ENCODE measurements at regions of chr12 and their contacts with region 1.

Region 1: DNA sequence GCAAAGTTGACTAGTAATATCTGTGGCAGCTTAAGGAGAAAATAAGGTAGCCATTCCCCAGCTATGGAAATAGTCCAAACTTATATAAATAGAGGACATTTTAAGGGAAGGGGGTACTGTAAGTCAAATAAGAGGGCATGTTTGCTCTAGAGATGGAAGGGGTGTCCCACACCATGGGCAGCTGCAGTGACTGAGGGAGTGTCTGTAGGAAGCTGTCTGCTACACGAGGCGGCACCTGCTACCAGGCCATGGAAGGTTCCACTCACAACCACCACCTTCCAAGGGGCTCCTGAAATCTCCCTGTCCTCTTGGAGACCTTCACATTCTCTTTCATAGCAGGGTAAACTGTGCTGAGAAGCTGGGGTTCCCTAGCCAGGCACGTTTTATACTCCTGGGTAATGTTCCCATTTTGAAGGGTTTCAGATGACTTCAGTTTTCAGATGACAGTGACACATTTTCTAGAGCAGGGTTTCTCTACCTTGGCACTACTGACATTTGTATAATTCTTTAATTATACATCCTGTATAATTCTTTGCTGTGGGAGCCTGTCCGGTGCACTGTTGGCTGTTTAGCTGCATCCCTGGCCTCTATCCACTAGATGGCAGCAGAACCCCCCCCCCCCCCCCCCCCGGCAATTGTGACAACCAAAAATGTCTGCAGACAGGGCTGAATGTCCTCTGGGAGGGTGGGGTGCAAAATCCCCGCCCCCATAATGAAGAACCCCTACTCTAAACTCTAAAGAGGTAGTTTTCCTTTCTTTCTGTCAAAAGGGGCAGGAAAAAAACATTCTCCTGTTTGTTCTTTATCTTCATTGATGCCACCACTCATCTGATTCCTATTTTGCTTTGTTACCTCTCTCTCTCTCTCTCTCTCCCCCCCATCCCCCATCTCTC is 11.6 kb upstream of the SMCO2 start:
- DNase-seq: no peak
- ATAC-seq: peak in 6 of 8 donors; percentile 53 to 73 (median 62)
- H3K4me3 ChIP-seq: no peak overlapping the region
- H3K27ac ChIP-seq: peak overlapping the region in 4 of 10 donors; percentile 18 to 32 (median 27)
- H3K4me1 ChIP-seq: peaks cover 0 to 21% (median 14%) of the 10 kb centered on the region in 9 donors
- H3K27me3 ChIP-seq: no peaks in the 10 kb centered on the region
- CTCF ChIP-seq: peak; percentile 29 to 74 (median 63)

Region 2: DNA sequence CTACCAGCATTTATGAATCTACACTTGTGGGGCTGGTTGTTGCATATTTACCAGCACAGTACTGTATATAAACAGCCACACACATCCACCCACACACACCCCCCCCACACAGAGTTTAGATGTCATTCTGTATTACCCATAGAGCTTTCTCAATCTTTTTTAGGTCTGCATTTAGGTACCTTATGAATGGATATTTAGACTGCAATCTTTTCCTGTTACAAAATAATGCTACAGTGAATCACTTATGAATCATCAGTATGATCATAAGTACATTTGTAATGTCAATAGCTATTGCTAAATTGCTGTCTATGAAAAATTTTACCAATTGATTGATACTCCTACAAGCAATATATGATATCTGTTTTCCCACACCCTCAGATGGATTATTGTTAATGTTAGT is 258.1 kb before region 1 on chr12:
- intact Hi-C with region 1: no loop called
- DNase-seq: no peak
- ATAC-seq: no peak
- H3K4me3 ChIP-seq: no peak overlapping the region
- H3K27ac ChIP-seq: peak overlapping the region in 5 of 10 donors; percentile 20 to 87 (median 82)
- H3K4me1 ChIP-seq: peaks cover 4 to 52% (median 23%) of the 10 kb centered on the region in 9 donors
- H3K27me3 ChIP-seq: no peaks in the 10 kb centered on the region
- CTCF ChIP-seq: no peak

Region 3: GRCh38 chr12:27505109-27505508 is 70.2 kb after region 1 on chr12:
- intact Hi-C with region 1: loop called in 2 of 10 experiments (anchors 5 kb)
- DNase-seq: no peak
- ATAC-seq: no peak
- H3K4me3 ChIP-seq: no peak overlapping the region
- H3K27ac ChIP-seq: peak overlapping the region; percentile 26 to 76 (median 67)
- H3K4me1 ChIP-seq: peaks cover 0 to 32% (median 19%) of the 10 kb centered on the region in 9 donors
- H3K27me3 ChIP-seq: no peaks in the 10 kb centered on the region
- CTCF ChIP-seq: no peak

Region 4: DNA sequence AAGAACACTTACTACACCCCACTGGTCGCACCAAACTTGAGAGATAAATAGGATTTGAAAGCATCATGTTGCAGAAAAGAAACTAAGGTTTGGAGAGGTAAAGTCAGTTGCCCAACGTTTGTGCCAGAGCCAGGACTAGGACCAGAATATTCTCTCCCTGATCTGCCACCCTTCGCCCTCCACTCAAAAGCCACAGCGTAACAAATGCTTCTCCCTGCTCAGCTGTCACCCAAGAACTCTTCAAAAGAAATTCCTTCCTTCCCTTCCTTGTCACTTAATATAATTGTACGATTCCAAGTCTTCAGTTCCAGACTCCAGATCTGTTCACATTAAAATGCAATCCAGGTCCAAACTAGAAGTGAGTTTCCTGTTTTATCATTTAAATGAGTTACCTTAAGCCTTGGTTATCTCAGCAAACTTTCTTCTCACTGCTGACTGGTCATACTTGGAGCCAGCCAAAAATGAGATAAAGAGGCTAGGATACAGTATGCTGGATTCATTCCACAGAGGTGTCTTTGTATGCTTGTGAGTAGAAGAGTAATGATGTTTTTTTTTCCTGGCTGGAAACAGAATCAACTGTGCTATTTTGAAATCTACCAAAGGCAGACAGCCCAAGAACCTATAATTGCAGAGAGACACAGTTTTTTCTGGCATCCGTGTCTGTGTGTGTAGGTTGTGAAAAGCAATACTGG is 76.3 kb after region 1 on chr12:
- intact Hi-C with region 1: loop called in 2 of 10 experiments (anchors 5 kb)
- DNase-seq: no peak
- ATAC-seq: peak; percentile 32 to 70 (median 54)
- H3K4me3 ChIP-seq: no peak overlapping the region
- H3K27ac ChIP-seq: peak overlapping the region; percentile 24 to 82 (median 67)
- H3K4me1 ChIP-seq: peaks cover 0 to 28% (median 16%) of the 10 kb centered on the region in 9 donors
- H3K27me3 ChIP-seq: no peaks in the 10 kb centered on the region
- CTCF ChIP-seq: no peak

Region 5: GRCh38 chr12:27549801-27550652 is 115.1 kb after region 1 on chr12:
- intact Hi-C with region 1: no loop called
- DNase-seq: peak; percentile 79 to 90
- ATAC-seq: peak; percentile 85 to 93 (median 89)
- H3K4me3 ChIP-seq: peak overlapping the region in 4 of 10 donors; percentile 2 to 30 (median 17)
- H3K27ac ChIP-seq: peak overlapping the region; percentile 65 to 96 (median 83)
- H3K4me1 ChIP-seq: peaks cover 30 to 100% (median 94%) of the 10 kb centered on the region in 9 donors
- H3K27me3 ChIP-seq: no peaks in the 10 kb centered on the region
- CTCF ChIP-seq: peak in 1 of 9 donors; percentile 10

Region 6: DNA sequence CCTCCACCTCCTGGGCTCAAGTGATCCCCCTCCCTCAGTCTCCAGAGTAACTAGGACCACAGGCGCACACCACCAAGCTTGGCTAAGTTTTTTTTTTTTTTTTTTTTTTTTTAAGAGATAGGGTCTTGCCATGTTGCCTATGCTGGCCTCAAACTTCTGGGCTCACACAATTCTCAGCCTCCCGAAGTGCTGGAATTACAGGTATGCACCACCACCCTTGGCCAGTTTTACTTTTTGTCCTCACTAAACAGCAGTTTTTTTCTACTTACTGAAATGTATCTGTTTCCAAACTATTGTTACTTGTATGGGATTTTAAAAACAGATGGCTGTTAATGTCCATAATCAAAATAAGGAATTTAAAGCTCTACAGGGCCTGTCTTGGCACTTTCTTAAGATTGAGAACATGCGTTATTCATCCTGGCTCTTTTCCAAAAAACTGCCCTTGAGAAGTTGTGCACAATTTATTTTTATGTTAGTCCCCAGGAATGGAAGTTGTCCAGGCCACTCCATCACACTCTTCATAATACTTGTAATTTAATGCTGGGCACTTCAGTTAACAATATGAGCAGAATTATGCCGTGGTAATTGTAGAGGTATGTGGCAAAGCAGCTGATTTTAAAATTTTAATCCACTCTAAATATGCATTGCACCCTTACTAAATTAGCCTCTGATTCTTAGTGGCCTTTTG is 209.4 kb after region 1 on chr12:
- intact Hi-C with region 1: loop called in 1 of 10 experiments (anchors 5 kb)
- DNase-seq: no peak
- ATAC-seq: peak in 2 of 8 donors; percentile 7 to 8
- H3K4me3 ChIP-seq: no peak overlapping the region
- H3K27ac ChIP-seq: peak overlapping the region in 2 of 10 donors; percentile 48 to 60
- H3K4me1 ChIP-seq: peaks cover 6 to 45% (median 30%) of the 10 kb centered on the region in 9 donors
- H3K27me3 ChIP-seq: no peaks in the 10 kb centered on the region
- CTCF ChIP-seq: no peak

Region 7: GRCh38 chr12:27652174-27652763 is 217.3 kb after region 1 on chr12:
- intact Hi-C with region 1: loop called in 6 of 10 experiments (anchors 2 to 5 kb)
- DNase-seq: peak in 1 of 2 donors; percentile 85
- ATAC-seq: peak in 7 of 8 donors; percentile 75 to 87 (median 82)
- H3K4me3 ChIP-seq: no peak overlapping the region
- H3K27ac ChIP-seq: no peak overlapping the region
- H3K4me1 ChIP-seq: peaks cover 0 to 15% (median 0%) of the 10 kb centered on the region in 9 donors
- H3K27me3 ChIP-seq: no peaks in the 10 kb centered on the region
- CTCF ChIP-seq: peak; percentile 74 to 95 (median 89)